Activated CD4-positive, alpha-beta T cell treated with anti-CD3 and anti-CD28 coated beads, Interleukin-2, amount 10 ng/mL, durations not matched to agents 24 days and 14 days (primary cell): ENCODE measurements at regions of chr17 and their contacts with region 1.

Region 1: DNA sequence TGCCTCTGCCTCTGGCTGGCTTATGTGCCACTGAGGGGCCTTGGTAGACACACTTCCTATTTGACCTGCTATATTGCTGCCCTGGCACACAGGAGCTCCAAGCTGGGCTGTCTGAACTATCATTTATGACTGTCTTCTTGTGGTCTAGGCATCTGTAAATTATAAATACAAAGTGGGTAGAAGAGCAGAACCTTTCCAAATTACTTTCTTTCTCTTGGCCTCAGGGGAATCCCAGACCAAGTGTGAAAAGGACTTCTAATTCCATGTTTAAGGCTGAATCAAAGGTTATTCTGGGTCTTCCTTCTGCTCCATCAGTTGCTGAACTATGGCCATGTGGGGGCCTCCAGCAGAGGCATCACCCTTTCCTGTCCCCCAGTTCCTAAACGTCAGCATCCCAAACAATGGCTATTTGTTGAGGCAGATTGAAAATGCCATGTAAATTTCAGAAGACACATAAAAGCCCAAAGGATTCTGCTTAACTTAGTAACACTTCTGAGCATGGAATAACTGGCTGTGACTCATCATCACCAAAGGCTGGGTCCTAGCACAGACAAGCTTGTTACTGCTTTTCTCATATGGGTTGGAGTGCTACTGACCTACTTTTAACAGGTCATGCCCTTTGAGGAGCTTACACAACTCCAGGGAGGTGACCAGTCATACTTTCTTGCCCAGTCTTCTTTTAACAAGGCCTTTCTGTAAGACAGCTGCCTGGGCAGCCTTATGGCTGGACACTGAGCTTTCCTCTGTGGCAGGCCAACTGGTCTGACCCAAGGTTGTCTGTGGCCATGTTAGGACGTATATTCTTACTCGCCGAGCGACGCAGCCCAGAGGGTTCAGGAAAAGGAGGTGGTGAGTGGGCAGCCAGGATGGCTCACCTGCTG is 154.8 kb downstream of the VPS53 start:
- DNase-seq: no peak
- H3K4me3 Mint-ChIP-seq: no peak overlapping the region
- H3K27ac Mint-ChIP-seq: peak overlapping the region; percentile 66
- H3K4me1 Mint-ChIP-seq: peaks cover 20% of the 10 kb centered on the region
- H3K27me3 Mint-ChIP-seq: no peaks in the 10 kb centered on the region

Region 2: GRCh38 chr17:416293-417206 is 143.2 kb before region 1 on chr17:
- intact Hi-C with region 1: loop called (anchors 2 kb)
- DNase-seq: peak; percentile 91
- H3K4me3 Mint-ChIP-seq: peak overlapping the region; percentile 93
- H3K27ac Mint-ChIP-seq: peak overlapping the region; percentile 100
- H3K4me1 Mint-ChIP-seq: peaks cover 79% of the 10 kb centered on the region
- H3K27me3 Mint-ChIP-seq: no peaks in the 10 kb centered on the region

Region 3: GRCh38 chr17:542943-543342 is 16.8 kb before region 1 on chr17:
- intact Hi-C with region 1: loop called (anchors 2 kb)
- DNase-seq: no peak
- H3K4me3 Mint-ChIP-seq: no peak overlapping the region
- H3K27ac Mint-ChIP-seq: no peak overlapping the region
- H3K4me1 Mint-ChIP-seq: peaks cover 12% of the 10 kb centered on the region
- H3K27me3 Mint-ChIP-seq: no peaks in the 10 kb centered on the region